H1 (cell line): ENCODE measurements at regions of chr14 and their contacts with region 1.

Region 1: DNA sequence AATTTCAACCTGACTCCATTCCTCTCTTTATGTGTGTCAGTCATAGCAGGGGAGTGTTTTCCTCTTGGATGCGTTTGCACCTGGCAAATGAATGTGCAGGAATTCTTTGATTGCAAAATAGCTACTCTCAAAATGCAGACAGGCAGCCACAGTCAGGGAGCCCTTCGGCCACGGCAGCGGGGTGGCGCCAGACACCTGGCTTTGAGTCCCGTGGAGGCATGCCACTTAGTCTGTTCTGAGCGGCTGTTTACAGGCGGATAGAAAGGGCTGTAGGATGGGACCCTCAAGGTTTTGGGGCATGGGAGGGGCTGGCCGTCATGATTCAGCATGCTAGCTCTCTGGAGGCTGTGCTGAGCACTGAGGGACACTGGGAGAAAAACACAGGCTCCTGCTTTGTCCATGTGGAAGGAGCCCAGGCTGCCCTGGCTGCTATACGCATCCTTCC is 117.1 kb downstream of the SLC25A47 start:
- DNase-seq: peak; percentile 31 to 75
- H3K4me3 ChIP-seq: no peak overlapping the region
- H3K27ac ChIP-seq: no peak overlapping the region
- H3K4me1 ChIP-seq: peaks cover 0 to 6% (median 4%) of the 10 kb centered on the region in 4 experiments; a peak in 4 of 7 replicates
- H3K27me3 ChIP-seq: no peaks in the 10 kb centered on the region
- CTCF ChIP-seq: peak; percentile 79 to 84 (median 79)
- EP300 ChIP-seq: no peak
- POLR2A ChIP-seq: no peak
- RAD21 ChIP-seq: peak; percentile 91 to 92

Region 2: DNA sequence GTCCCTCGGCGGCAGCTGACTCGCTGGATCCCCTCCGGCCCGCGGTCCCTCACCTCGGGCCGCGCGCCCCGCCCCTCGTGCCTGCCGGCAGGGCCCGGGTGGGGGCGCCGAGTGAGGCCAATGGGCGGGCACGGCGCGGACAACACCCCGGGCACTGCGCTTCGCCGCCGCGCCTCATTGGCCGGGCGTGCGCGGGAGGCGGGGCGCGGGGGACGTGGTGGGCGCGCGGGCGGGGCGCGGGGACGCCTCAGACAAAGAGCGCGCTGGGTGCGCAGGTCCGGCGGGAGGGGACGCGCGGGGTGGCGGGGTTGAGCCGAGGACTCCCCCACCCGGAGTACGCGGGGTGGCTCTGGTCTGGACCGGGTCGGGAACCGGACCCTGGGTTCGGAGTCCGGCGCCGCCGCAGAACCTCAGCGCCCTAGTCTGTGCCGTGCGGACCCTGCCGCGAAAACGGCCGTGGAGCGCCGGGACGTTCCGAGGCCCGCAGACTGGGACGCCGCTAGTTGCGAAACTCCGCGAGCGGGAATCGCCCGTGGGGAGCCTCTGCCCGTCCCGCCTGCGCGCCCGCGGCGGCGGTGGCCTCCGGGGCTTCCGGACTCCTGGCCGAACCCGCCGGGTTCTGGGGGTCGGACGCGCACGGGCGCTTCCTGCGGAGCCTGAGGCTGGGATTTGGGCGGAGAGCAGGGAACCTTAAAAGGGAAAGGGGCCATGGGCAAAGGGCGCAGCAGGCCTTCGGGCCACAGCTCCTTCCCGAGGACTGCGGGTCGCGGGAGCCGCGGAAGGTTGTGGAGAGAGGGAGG is 133.6 kb before region 1 on chr14 and contains the start of gene SLC25A29:
- CTCF ChIA-PET with region 1: no interaction called
- POLR2A ChIA-PET with region 1: no interaction called
- DNase-seq: peak in 1 of 2 experiments; percentile 89
- H3K4me3 ChIP-seq: peak within 1 kb of the TSS; percentile 70 to 95 (median 81)
- H3K27ac ChIP-seq: peak within 1 kb of the TSS; percentile 74
- H3K4me1 ChIP-seq: peaks cover 10 to 29% (median 19%) of the 10 kb centered on the region in 4 experiments
- H3K27me3 ChIP-seq: no peaks in the 10 kb centered on the region; a peak in 1 of 7 replicates
- CTCF ChIP-seq: no peak
- EP300 ChIP-seq: no peak
- POLR2A ChIP-seq: peak in 1 of 2 experiments; percentile 56; a peak in 2 of 3 replicates
- RAD21 ChIP-seq: no peak; a peak in 1 of 4 replicates
- total RNA-seq, gene SLC25A29: 135 TPM in 2 replicates

Region 3: DNA sequence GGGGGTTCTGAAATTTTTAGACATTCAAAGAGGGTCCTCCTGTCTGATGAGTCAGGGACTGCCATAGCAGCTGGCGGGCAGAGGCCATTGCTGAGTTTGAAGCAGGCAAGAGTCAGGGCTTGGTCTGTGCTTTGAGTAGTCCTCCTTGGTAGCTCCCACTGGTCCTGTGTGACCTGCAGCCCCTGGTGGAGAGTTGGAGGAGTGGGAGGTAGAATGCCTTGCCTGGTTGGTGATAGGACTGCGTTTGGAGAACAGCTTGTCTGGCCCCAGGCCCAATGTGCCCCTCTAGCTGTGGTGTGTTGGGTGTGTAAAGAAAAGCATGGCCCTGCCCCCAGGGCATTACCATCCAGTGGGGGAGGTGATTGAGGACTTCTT is 30.3 kb after region 1 on chr14:
- CTCF ChIA-PET with region 1: interaction called, 10 read pairs
- POLR2A ChIA-PET with region 1: no interaction called
- DNase-seq: no peak
- H3K4me3 ChIP-seq: no peak overlapping the region
- H3K27ac ChIP-seq: no peak overlapping the region
- H3K4me1 ChIP-seq: peaks cover 3 to 10% (median 6%) of the 10 kb centered on the region in 4 experiments
- H3K27me3 ChIP-seq: no peaks in the 10 kb centered on the region
- CTCF ChIP-seq: peak in 1 of 3 experiments; percentile 28; a peak in 2 of 4 replicates
- EP300 ChIP-seq: no peak
- POLR2A ChIP-seq: no peak
- RAD21 ChIP-seq: peak; percentile 10 to 21; a peak in 2 of 4 replicates

Region 4: GRCh38 chr14:100488057-100488456 is 47.8 kb after region 1 on chr14:
- CTCF ChIA-PET with region 1: interaction called, 13 read pairs
- POLR2A ChIA-PET with region 1: interaction called, 3 read pairs
- DNase-seq: no peak
- H3K4me3 ChIP-seq: no peak overlapping the region
- H3K27ac ChIP-seq: no peak overlapping the region
- H3K4me1 ChIP-seq: no peaks in the 10 kb centered on the region; a peak in 1 of 7 replicates
- H3K27me3 ChIP-seq: no peaks in the 10 kb centered on the region
- CTCF ChIP-seq: no peak
- EP300 ChIP-seq: no peak
- POLR2A ChIP-seq: no peak
- RAD21 ChIP-seq: no peak